Activated CD4-positive, alpha-beta T cell treated with anti-CD3 and anti-CD28 coated beads for 36 hours (primary cell): ENCODE measurements at regions of chr7 and their contacts with region 1.

Region 1: DNA sequence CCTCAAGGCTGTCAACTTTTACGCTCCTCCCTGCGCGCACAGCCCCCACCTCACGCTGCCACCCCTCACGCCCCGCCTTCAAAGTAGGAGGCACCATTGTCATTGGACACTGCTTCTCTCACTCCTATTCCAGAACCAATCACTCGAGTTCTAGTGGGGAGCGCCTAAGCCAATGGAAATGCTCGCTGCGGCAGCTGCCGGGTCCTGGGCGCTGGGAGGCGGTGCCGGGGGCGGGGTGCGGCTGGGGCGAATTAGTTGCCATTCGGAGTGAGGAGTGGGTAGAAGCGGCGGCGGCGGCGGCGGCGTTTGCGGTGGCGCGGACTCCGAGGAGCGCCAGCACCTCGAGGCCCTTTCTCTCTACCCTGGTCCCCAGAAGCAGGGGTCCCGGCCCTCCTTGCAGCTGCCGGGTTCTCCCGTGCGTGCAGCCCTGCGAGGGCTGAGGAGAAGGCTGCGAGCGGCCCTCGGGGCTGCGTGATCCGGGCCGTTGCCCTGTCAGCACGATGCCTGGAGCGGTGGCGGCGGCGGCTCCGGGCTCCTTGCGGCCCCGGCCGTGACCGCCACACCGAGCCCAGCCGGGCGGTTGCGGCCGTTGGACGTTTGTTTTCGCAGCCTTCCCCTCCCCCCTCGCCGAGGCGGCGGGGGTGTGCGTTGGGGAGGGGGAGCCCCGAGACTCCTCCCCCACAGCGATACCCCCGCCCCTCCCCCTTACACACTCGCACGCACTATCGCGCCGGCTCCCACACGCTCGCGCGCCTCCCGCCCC is at the start of gene GLCCI1:
- DNase-seq: peak; percentile 98
- ATAC-seq: peak; percentile 95
- H3K4me3 Mint-ChIP-seq: peak within 1 kb of the TSS; percentile 89
- H3K27ac Mint-ChIP-seq: peak within 1 kb of the TSS; percentile 95
- H3K4me1 Mint-ChIP-seq: peaks cover 30% of the 10 kb centered on the region
- H3K27me3 Mint-ChIP-seq: no peaks in the 10 kb centered on the region
- total RNA-seq, gene GLCCI1: 12.3 to 15.1 TPM

Region 2: DNA sequence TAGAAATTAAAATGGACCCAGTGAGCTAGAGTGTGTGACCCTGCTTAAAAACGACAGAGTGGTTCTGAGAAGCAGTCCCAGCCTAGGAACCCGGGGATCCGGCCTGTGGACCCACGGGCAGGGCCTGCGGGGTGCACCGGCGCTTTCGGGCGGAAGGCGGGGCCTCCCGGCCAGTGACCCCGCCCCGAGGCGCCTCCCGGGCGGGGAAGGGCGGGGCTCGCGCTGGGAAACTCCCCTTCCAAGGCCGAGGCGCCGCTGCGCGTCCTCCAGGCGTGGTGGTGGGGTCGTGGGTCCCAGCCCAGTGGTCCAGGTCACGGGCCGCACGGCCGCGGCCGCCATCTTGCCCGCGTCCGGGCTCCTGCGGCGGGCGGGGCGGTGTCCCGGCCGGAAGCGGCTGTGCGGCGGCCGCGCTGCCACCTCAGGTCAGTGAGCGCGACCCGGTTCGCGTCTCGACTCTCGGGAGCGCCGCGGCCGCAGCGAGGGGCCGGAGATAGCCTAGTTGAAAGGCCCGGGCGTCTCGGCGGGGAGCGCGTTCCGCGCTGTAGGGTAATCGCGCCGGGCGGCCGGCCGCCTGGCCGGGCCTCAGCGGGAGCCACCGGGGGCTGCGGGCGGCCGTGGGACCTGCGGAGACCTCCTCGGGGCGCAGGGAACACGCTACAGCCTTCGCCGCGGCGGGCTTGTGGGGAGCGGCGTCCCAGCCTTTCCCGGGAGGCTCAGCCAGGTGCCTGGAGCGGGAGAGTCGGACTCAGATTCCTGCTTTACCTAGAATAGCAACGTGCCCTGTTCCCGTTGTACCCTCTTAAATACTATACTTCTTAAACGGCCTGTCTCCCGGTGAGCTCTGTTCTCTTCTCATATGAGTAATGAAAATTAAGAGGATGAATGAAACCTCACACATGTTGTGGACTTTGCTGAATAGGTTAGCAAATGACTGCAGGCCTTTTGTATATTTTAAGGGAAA is 401.8 kb before region 1 on chr7 and contains the start of gene MIOS:
- CTCF ChIA-PET with region 1: no interaction called
- POLR2A ChIA-PET with region 1: no interaction called
- intact Hi-C with region 1: loop called (anchors 1 to 10 kb)
- DNase-seq: peak; percentile 89
- ATAC-seq: peak; percentile 90
- H3K4me3 Mint-ChIP-seq: peak within 1 kb of the TSS; percentile 83
- H3K27ac Mint-ChIP-seq: peak within 1 kb of the TSS; percentile 90
- H3K4me1 Mint-ChIP-seq: peaks cover 29% of the 10 kb centered on the region
- H3K27me3 Mint-ChIP-seq: no peaks in the 10 kb centered on the region
- total RNA-seq, gene MIOS: 41.7 to 45.7 TPM

Region 3: DNA sequence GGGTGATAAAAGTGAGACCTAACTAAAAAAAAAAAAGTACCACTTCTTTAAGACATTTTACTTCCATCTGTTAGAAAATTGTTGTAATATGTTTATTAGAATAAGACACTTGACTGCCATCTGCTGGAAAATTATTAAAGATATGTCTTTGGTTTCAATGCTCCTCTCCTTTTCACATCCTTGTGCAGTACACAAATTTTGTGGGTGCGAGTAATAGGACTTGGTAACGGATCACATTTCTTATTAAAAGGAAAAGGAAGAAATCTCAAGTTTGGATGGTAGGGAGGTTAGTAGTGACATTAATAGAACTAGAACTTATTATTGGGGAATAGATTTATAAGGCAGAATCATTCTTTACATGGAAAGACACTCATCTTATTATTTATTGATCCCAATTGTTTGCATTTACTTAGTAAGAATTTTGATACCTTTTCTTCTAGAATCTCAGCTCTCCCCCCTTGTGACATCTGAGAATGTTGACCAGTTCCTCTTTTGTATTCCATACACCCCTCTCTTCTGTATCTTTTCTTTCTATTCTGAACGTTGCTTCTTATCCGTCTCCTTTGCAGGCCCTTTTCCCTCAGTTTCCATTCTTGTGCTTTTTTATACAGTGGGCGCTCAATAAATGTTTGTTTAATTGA is 207.3 kb before region 1 on chr7:
- CTCF ChIA-PET with region 1: no interaction called
- POLR2A ChIA-PET with region 1: no interaction called
- intact Hi-C with region 1: loop called (anchors 2 to 5 kb)
- DNase-seq: no peak
- ATAC-seq: peak; percentile 34
- H3K4me3 Mint-ChIP-seq: peak overlapping the region; percentile 74
- H3K27ac Mint-ChIP-seq: peak overlapping the region; percentile 87
- H3K4me1 Mint-ChIP-seq: peaks cover 41% of the 10 kb centered on the region
- H3K27me3 Mint-ChIP-seq: no peaks in the 10 kb centered on the region

Region 4: DNA sequence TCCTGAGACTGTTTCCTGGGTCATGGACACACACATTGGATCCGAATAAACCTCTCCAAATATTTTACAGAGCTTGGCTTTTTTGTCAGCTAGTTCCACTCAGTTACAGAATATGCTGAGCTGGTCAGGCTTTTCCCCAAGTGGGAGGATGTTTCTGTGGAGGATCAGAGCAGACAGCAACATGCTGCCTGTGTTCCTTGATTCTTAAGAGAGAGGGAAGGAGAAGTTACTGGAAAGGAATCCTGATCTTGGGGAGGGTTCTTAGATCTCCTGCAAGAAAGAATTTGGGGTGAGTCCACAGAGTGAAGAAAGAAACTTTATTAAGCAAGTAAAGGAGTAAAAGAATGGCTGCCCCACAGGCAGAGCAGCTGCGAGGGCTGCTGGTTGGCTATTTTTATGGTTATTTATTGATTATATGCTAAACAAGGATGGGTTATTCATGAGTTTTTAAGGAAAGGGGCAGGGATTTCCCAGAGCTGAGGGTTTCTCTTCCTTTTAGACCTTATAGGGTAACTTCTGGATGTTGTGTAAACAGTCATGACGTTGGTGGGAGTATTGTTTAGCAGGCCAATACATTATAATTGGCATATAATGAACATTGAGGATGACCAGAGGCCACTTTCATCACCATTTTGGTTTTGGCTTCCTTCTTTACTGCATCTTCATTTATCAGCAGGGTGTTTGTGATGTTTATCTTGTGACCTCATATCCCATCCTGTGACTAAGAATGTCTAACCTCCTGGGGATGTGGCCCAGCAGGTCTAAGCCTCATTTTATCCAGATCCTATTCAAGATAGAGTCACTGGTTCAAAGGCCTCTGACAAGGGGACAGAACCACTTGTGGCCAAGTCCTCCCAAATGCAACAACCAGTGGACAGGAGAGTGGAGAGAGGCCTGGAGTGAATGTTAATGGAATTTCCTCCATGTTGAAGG is 173.3 kb before region 1 on chr7:
- CTCF ChIA-PET with region 1: no interaction called
- POLR2A ChIA-PET with region 1: no interaction called
- intact Hi-C with region 1: no loop called
- DNase-seq: no peak
- ATAC-seq: peak; percentile 65
- H3K4me3 Mint-ChIP-seq: no peak overlapping the region
- H3K27ac Mint-ChIP-seq: no peak overlapping the region
- H3K4me1 Mint-ChIP-seq: no peaks in the 10 kb centered on the region
- H3K27me3 Mint-ChIP-seq: no peaks in the 10 kb centered on the region

Region 5: GRCh38 chr7:7876419-7876818 is 92.3 kb before region 1 on chr7:
- CTCF ChIA-PET with region 1: no interaction called
- POLR2A ChIA-PET with region 1: no interaction called
- intact Hi-C with region 1: no loop called
- DNase-seq: no peak
- ATAC-seq: no peak
- H3K4me3 Mint-ChIP-seq: no peak overlapping the region
- H3K27ac Mint-ChIP-seq: no peak overlapping the region
- H3K4me1 Mint-ChIP-seq: no peaks in the 10 kb centered on the region
- H3K27me3 Mint-ChIP-seq: no peaks in the 10 kb centered on the region

Region 6: DNA sequence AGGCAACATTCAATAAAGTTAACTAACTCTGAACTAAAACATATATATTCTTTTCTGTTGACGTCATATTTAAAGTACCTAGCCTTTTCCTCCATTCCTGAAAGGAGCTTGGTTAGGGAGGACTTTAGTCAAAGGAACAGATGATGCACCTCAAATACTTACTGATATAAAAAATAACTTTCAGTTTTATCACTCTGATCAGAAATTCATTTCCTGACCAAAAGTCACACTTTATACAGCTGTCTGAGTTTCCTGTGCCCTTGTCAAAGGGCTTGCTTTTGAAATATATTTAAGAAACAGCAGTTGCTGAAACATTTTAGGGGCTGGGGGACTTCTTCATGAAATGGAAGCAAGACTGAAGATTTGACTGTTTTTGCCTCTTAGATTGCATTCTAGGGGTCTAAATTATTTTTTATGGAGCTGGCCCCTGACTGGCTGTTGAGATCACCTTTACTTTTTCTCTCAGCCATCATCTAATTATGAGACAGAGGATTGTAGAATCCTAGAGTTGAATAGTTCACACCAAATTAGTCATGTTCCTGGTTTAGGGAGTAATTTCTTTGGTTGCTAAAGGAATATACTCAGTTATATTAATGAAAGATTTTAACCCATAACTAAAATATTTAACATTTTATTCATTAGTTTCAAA is 46.5 kb after region 1 on chr7:
- CTCF ChIA-PET with region 1: interaction called, 4 read pairs
- POLR2A ChIA-PET with region 1: interaction called, 3 read pairs
- intact Hi-C with region 1: loop called (anchors 2 kb)
- DNase-seq: no peak
- ATAC-seq: peak; percentile 89
- H3K4me3 Mint-ChIP-seq: no peak overlapping the region
- H3K27ac Mint-ChIP-seq: peak overlapping the region; percentile 2
- H3K4me1 Mint-ChIP-seq: peaks cover 46% of the 10 kb centered on the region
- H3K27me3 Mint-ChIP-seq: no peaks in the 10 kb centered on the region

Region 7: GRCh38 chr7:8134089-8134733 is 165.5 kb after region 1 on chr7:
- CTCF ChIA-PET with region 1: interaction called, 3 read pairs
- POLR2A ChIA-PET with region 1: interaction called, 3 read pairs
- intact Hi-C with region 1: loop called in 1 of 2 experiments (anchors 2 kb)
- DNase-seq: peak; percentile 60
- ATAC-seq: peak; percentile 84
- H3K4me3 Mint-ChIP-seq: peak overlapping the region; percentile 22
- H3K27ac Mint-ChIP-seq: peak overlapping the region; percentile 79
- H3K4me1 Mint-ChIP-seq: peaks cover 56% of the 10 kb centered on the region
- H3K27me3 Mint-ChIP-seq: no peaks in the 10 kb centered on the region

Region 8: GRCh38 chr7:8261711-8262695 is 293.3 kb after region 1 on chr7 and contains the start of gene ICA1:
- CTCF ChIA-PET with region 1: no interaction called
- POLR2A ChIA-PET with region 1: no interaction called
- intact Hi-C with region 1: loop called in 1 of 2 experiments (anchors 2 kb)
- DNase-seq: peak; percentile 61
- ATAC-seq: peak; percentile 76
- H3K4me3 Mint-ChIP-seq: peak within 1 kb of the TSS; percentile 67
- H3K27ac Mint-ChIP-seq: peak within 1 kb of the TSS; percentile 44
- H3K4me1 Mint-ChIP-seq: peaks cover 8% of the 10 kb centered on the region
- H3K27me3 Mint-ChIP-seq: peaks cover 49% of the 10 kb centered on the region
- total RNA-seq, gene ICA1: 0.57 to 1.0 TPM